CD8-positive, alpha-beta T cell (primary cell): ENCODE measurements at regions of chr12 and their contacts with region 1.

Region 1: GRCh38 chr12:103455020-103455763 is 40.6 kb downstream of the C12orf42 start:
- DNase-seq: peak in 3 of 9 experiments; percentile 29 to 75 (median 51)
- ATAC-seq: peak; percentile 91
- H3K4me3 ChIP-seq: no peak overlapping the region
- H3K4me3 Mint-ChIP-seq: peak overlapping the region; percentile 20
- H3K27ac ChIP-seq: peak overlapping the region in 1 of 2 experiments; percentile 4
- H3K27ac Mint-ChIP-seq: peak overlapping the region; percentile 80
- H3K4me1 ChIP-seq: peaks cover 22% of the 10 kb centered on the region
- H3K4me1 Mint-ChIP-seq: peaks cover 33% of the 10 kb centered on the region
- H3K27me3 ChIP-seq: no peaks in the 10 kb centered on the region
- H3K27me3 Mint-ChIP-seq: no peaks in the 10 kb centered on the region
- CTCF ChIP-seq: no peak

Region 2: DNA sequence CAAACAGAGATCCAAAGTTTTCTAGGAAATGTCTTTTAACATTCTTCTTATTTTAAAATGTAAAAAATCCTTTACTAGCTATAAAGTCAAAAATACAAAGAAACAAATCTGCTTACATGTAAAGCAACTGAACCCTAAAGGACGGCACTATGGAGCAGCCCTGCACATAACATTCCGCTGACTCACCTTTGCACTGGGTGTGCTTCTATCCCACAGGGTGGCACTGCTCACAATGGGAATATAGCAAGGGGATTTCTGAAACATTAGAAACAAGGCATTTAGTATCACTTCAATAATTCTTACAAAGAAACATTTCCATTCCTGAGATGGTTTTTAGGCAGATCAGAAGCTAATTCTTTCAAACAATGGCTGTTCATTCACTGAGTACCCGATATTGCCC is 53.8 kb before region 1 on chr12:
- CTCF ChIA-PET with region 1: no interaction called
- POLR2A ChIA-PET with region 1: no interaction called
- intact Hi-C with region 1: loop called in 1 of 2 experiments (anchors 10 kb)
- DNase-seq: peak in 2 of 9 experiments; percentile 12 to 32
- ATAC-seq: no peak
- H3K4me3 ChIP-seq: no peak overlapping the region
- H3K4me3 Mint-ChIP-seq: no peak overlapping the region
- H3K27ac ChIP-seq: no peak overlapping the region
- H3K27ac Mint-ChIP-seq: no peak overlapping the region
- H3K4me1 ChIP-seq: no peaks in the 10 kb centered on the region
- H3K4me1 Mint-ChIP-seq: peaks cover 2% of the 10 kb centered on the region
- H3K27me3 ChIP-seq: no peaks in the 10 kb centered on the region
- H3K27me3 Mint-ChIP-seq: no peaks in the 10 kb centered on the region
- CTCF ChIP-seq: no peak

Region 3: DNA sequence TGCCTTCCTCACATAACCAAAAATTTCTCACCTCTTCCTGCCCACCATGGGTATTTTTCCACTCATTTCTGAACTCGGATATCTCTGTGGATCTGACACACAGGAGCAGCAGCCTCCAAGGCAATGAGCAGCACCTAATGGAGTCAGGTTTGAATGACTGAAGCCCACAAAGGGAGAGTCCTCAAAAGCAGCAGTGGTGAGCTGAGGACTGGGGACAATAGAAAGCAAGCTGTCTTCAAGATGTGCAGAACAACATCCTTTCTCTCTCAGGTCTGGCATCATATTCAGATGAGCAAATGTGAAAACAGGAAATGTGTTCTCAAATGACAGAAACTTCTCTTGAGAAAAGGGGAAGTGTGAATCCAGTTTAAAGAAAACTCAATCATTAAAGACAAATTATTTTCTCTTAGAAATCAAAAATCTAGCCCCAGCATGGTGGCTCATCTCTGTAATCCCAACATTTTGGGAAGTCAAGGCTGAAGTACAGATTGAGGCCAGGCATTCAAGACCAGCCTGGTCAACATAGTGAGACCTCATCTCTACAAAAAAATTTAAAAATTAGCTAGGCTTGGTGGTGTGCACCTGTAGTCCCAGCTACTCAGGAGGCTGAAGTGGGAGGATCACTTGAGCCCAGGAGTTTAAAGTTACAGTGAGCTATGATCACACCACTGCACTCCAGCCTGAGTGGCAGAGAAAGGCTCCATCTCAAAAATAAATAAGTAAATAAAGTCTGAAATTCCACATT is 13.6 kb before region 1 on chr12:
- CTCF ChIA-PET with region 1: no interaction called
- POLR2A ChIA-PET with region 1: interaction called, 5 read pairs
- intact Hi-C with region 1: loop called in 1 of 2 experiments (anchors 2 kb)
- DNase-seq: peak; percentile 7 to 77 (median 38)
- ATAC-seq: peak; percentile 93
- H3K4me3 ChIP-seq: peak overlapping the region; percentile 19 to 45
- H3K4me3 Mint-ChIP-seq: peak overlapping the region; percentile 91
- H3K27ac ChIP-seq: peak overlapping the region; percentile 45 to 85
- H3K27ac Mint-ChIP-seq: peak overlapping the region; percentile 98
- H3K4me1 ChIP-seq: peaks cover 19% of the 10 kb centered on the region
- H3K4me1 Mint-ChIP-seq: peaks cover 25% of the 10 kb centered on the region
- H3K27me3 ChIP-seq: no peaks in the 10 kb centered on the region
- H3K27me3 Mint-ChIP-seq: no peaks in the 10 kb centered on the region
- CTCF ChIP-seq: no peak

Region 4: DNA sequence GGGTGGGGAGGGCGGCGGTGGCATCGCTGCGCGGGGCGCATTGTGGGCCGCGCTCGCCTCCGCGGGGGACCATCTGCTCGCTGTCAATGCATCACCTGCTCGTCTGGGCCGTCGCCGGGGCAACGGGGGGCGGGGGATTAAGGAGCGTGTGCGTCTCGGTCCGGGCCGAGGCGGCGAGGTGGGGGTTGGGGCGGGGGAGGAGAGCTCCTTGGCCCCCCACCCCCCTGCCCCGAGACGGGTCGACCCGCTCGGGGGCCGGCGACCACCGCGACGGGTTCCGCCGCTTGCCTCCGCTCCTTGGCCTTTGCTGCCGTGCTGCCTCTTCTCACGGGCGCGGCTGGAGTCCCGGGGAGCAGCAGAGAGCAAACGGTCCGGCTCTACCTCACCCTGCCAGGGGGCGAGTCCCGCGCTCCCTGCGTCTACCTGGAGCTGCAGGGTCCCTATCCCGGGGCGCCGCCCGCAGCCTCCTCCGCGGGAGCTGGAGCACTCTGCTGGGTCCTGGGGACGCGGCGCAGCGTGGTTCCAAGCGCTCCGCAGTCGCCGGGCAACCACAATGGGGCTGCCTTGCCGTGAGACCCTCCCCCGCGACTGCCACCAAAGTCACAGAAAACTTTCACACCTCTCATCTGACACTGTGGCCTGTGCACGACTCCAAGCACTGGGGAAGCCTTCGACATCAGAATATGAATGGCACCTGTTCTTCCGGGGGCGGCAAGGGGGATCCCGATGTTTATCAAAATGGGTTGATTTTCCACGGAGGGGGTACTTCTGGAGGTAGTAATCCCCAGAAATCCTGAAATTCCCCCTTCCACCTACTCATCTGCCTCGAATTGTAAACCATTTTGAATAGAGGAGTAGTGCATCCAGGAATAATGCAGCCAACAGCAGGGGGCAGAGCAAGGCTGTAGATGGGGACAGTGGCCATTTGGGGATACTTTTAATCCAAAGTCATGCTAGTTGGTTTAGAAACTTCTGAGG is 40.6 kb after region 1 on chr12 and contains the start of gene C12orf42:
- CTCF ChIA-PET with region 1: interaction called, 3 read pairs
- POLR2A ChIA-PET with region 1: no interaction called
- intact Hi-C with region 1: loop called in 1 of 2 experiments (anchors 5 kb)
- DNase-seq: peak in 8 of 9 experiments; percentile 44 to 82 (median 74)
- ATAC-seq: peak; percentile 79
- H3K4me3 ChIP-seq: peak within 1 kb of the TSS; percentile 53 to 66
- H3K4me3 Mint-ChIP-seq: peak within 1 kb of the TSS; percentile 83
- H3K27ac ChIP-seq: peak within 1 kb of the TSS; percentile 39 to 46
- H3K27ac Mint-ChIP-seq: peak within 1 kb of the TSS; percentile 86
- H3K4me1 ChIP-seq: peaks cover 19% of the 10 kb centered on the region
- H3K4me1 Mint-ChIP-seq: peaks cover 19% of the 10 kb centered on the region
- H3K27me3 ChIP-seq: peaks cover 0 to 2% of the 10 kb centered on the region in 2 experiments
- H3K27me3 Mint-ChIP-seq: peaks cover 7% of the 10 kb centered on the region
- CTCF ChIP-seq: peak; percentile 29
- total RNA-seq, gene C12orf42: 5.5 to 8.8 TPM